Activated CD4-positive, alpha-beta memory T cell treated with anti-CD3 and anti-CD28 coated beads, Interleukin-2, amount 10 ng/mL, durations not matched to agents 7 days and 5 days (primary cell): ENCODE measurements at regions of chr10 and their contacts with region 1.

Region 1: DNA sequence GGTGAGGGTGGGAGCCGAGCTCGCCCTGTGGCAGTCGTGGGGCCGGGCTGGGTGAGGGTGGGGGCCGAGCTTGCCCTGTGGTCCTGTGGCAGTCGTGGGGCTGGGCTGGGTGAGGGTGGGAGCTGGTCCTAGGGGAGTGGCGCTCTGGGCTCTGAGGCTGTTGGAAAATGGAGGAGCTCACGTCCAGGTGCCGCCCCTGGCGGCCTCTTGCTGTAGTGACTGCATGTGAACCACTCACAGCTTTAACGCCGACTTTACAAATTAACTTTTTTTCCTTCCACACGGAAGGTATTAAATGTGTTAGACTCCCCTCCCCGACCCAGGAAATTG is 312.6 kb downstream of the WDR37 start:
- DNase-seq: peak; percentile 42
- H3K4me3 Mint-ChIP-seq: no peak overlapping the region
- H3K27ac Mint-ChIP-seq: no peak overlapping the region
- H3K4me1 Mint-ChIP-seq: no peaks in the 10 kb centered on the region
- H3K27me3 Mint-ChIP-seq: peaks cover 18% of the 10 kb centered on the region

Region 2: GRCh38 chr10:1109795-1110673 is 258.8 kb before region 1 on chr10:
- CTCF ChIA-PET with region 1: interaction called, 12 read pairs
- POLR2A ChIA-PET with region 1: no interaction called
- DNase-seq: peak; percentile 85
- H3K4me3 Mint-ChIP-seq: peak overlapping the region; percentile 45
- H3K27ac Mint-ChIP-seq: peak overlapping the region; percentile 80
- H3K4me1 Mint-ChIP-seq: peaks cover 30% of the 10 kb centered on the region
- H3K27me3 Mint-ChIP-seq: no peaks in the 10 kb centered on the region

Region 3: DNA sequence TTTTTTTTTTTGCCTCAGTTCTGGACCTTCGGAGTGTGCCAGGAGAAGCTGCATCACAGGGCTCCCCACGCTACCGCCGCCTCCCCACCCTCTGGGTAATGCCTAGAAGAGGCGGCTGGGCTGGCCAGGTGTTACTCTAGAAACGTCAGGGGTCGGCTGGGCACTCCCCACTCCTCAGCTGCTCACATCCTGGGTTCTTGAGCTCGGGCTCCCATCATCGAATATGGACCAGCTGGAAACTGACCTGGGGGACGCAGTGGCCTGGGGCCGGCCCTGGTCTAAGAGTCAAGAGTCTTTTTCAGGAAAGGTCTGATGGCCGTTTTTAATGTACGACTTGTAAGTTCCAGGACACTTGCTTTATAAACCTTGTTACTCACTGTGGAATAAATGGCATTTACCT is 13.9 kb after region 1 on chr10:
- CTCF ChIA-PET with region 1: no interaction called
- POLR2A ChIA-PET with region 1: no interaction called
- DNase-seq: no peak
- H3K4me3 Mint-ChIP-seq: no peak overlapping the region
- H3K27ac Mint-ChIP-seq: no peak overlapping the region
- H3K4me1 Mint-ChIP-seq: no peaks in the 10 kb centered on the region
- H3K27me3 Mint-ChIP-seq: peaks cover 54% of the 10 kb centered on the region